ENCODE measurements at regions of chr19 and their contacts with region 1.

Region 1: DNA sequence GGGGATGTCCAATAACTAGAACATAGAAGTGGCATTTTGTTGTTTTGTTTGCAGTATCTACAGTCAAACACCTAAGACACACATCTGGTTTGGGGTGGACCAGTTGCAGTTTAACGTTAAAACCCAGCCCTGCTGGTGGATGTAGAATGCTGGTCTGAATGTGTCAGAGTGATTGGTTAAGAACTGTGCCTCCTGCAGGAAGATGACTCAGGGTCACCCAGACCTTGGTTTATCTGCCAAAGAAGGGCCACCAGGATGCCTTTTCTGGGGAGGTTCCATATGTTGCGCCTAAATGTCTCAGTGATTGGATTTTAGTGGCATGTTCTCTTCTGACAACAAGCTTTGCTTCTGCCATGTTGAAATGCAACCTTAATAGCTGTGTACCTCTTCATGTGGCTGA is 23.1 kb downstream of the ZNF536 start:
- DNase-seq: no peak
- H3K4me3 ChIP-seq: no peak overlapping the region
- CTCF ChIP-seq: no peak

Region 2: GRCh38 chr19:30471441-30471840 is 76.2 kb after region 1 on chr19:
- in situ Hi-C with region 1: loop called (anchors 5 kb)
- DNase-seq: no peak
- H3K4me3 ChIP-seq: no peak overlapping the region
- CTCF ChIP-seq: no peak

Region 3: GRCh38 chr19:30504272-30504671 is 109.0 kb after region 1 on chr19:
- in situ Hi-C with region 1: no loop called
- DNase-seq: no peak
- H3K4me3 ChIP-seq: no peak overlapping the region
- CTCF ChIP-seq: no peak

Measured in astrocyte of the cerebellum (primary cell).